Mammary epithelial cell (primary cell): ENCODE measurements at regions of chr16 and their contacts with region 1.

Region 1: GRCh38 chr16:84611041-84611440 is 6.8 kb downstream of the COTL1 start:
- DNase-seq: no peak
- H3K4me3 ChIP-seq: no peak overlapping the region
- H3K27ac ChIP-seq: no peak overlapping the region
- H3K4me1 ChIP-seq: peaks cover 20% of the 10 kb centered on the region
- H3K27me3 ChIP-seq: no peaks in the 10 kb centered on the region
- CTCF ChIP-seq: no peak

Region 2: GRCh38 chr16:84569382-84569987 is 41.6 kb before region 1 on chr16:
- CTCF ChIA-PET with region 1: no interaction called
- dilution Hi-C with region 1: loop called (anchors 5 kb)
- in situ Hi-C with region 1: no loop called
- intact Hi-C with region 1: no loop called
- DNase-seq: no peak
- H3K4me3 ChIP-seq: no peak overlapping the region
- H3K27ac ChIP-seq: no peak overlapping the region
- H3K4me1 ChIP-seq: no peaks in the 10 kb centered on the region
- H3K27me3 ChIP-seq: no peaks in the 10 kb centered on the region
- CTCF ChIP-seq: no peak

Region 3: DNA sequence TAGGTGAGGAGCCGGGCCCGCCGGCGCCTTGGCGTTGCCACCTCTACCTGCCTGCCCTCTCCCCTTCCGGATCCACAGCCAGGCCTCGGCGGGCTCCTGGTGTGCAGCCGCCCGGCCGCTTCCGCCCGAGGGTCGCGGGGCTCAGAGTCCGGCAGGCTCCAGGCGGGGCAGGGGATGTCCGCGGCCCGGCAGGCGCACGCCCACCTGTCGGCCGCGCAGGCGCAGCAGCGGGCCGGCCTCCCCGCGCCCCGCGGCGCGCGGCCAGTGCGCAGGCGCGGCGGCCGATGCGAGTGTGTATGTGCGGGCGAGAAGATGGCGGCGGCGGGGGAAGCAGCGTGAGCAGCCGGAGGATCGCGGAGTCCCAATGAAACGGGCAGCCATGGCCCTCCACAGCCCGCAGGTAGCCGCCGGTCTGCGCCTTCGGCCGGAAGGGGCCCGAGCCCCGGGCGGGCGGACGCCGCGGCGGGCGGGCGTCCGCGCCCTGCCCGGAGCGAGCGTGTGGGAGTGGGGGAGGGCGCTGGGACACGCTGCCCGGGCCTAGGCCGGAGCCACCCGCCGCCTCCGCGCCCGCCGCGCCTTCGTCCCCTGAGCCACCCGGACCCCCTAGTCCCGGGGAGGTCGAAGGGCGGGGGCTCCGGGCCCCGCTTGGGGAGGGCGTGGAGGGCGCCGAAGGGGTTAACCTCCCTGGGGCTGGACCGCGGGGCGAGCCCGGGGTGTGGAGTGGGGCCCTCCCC is 88.8 kb after region 1 on chr16 and contains the start of gene USP10:
- CTCF ChIA-PET with region 1: no interaction called
- dilution Hi-C with region 1: loop called (anchors 5 kb)
- in situ Hi-C with region 1: no loop called
- intact Hi-C with region 1: no loop called
- DNase-seq: peak; percentile 66
- H3K4me3 ChIP-seq: peak within 1 kb of the TSS; percentile 75 to 90 (median 86)
- H3K27ac ChIP-seq: peak within 1 kb of the TSS; percentile 71
- H3K4me1 ChIP-seq: peaks cover 4% of the 10 kb centered on the region
- H3K27me3 ChIP-seq: no peaks in the 10 kb centered on the region
- CTCF ChIP-seq: no peak
- total RNA-seq, gene USP10: 60.5 to 111 TPM